A673 (cell line): ENCODE measurements at regions of chr13 and their contacts with region 1.

Region 1: DNA sequence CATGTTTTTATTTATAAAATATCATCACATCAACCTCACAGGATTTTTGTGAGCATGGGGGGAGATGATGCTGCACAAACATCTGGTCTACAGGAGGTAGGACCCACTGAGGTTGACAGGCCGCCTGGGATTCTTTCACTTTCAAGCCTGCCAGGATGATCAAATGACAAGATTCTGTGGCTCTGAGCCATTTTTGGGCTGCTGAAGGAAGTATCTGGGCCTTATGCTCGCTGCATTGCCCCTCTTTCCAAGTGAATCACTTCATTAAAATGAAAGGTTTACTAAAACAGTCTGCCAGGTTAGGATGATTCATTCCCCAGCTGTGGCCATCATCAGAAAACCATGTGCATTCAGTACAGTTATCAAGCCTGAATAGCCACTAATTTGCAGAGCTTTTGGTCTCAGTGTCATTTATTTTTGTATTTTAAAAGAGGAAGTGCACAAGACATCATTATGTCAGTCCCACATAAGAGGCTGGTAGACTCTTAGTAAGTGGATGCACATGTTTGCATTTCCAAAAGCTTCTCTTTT is 34.4 kb downstream of the STARD13 start:
- DNase-seq: peak; percentile 79
- H3K4me3 ChIP-seq: no peak overlapping the region
- H3K27ac ChIP-seq: peak overlapping the region; percentile 57
- H3K4me1 ChIP-seq: peaks cover 31% of the 10 kb centered on the region
- H3K27me3 ChIP-seq: no peaks in the 10 kb centered on the region
- CTCF ChIP-seq: no peak

Region 2: DNA sequence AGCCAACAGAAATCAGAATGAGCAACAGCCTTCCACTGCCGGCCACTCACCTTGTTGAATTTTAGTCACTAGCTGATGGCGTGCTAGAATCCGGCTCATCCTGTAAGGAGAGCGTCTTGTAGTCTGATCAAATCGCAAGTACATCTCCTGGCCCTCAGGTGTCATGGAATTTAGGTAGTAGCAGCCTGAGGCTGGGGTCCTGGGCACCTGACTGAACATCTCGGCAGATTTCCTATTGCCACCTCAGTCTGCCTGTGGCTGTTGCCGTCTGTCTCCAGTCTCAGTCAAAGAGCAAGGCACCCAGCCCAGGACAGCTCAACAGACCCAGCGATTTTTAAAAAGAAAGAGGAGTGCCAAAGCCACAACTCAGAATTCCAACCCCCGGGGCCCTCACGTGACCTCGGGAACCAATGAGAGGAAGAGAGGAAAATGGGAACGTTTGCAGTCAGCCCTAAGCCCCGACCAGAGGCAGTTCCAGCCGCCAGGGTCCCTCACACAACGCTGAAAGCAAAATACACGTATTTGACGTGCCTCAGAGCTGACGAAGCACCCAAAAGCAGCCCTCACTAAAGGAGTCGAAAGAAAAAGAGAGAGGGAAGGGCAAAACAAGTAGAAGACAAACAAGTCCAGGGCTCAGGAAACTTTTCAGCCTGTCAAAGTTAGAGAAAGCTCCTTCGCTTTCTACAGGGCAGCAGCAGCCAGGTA is 34.4 kb after region 1 on chr13 and contains the start of gene STARD13:
- CTCF ChIA-PET with region 1: no interaction called
- POLR2A ChIA-PET with region 1: no interaction called
- intact Hi-C with region 1: loop called (anchors 2 kb)
- DNase-seq: peak; percentile 98
- H3K4me3 ChIP-seq: peak within 1 kb of the TSS; percentile 58
- H3K27ac ChIP-seq: peak within 1 kb of the TSS; percentile 72
- H3K4me1 ChIP-seq: peaks cover 24% of the 10 kb centered on the region
- H3K27me3 ChIP-seq: no peaks in the 10 kb centered on the region
- CTCF ChIP-seq: peak; percentile 53
- total RNA-seq, gene STARD13: 45.7 and 48.7 TPM in 2 replicates